Activated T-helper 1 cell treated with anti-CD3 and anti-CD28 coated beads, Interleukin-12 subunit alpha, Interleukin-12 subunit beta, Interleukin-2, Interleukin-4 antibody, amounts not matched to agents 30 ng/mL and 10 ng/mL and 1 ng/mL, durations not matched to agents 14 hours and 24 hours and 36 hours (primary cell): ENCODE measurements at regions of chr1 and their contacts with region 1.

Region 1: DNA sequence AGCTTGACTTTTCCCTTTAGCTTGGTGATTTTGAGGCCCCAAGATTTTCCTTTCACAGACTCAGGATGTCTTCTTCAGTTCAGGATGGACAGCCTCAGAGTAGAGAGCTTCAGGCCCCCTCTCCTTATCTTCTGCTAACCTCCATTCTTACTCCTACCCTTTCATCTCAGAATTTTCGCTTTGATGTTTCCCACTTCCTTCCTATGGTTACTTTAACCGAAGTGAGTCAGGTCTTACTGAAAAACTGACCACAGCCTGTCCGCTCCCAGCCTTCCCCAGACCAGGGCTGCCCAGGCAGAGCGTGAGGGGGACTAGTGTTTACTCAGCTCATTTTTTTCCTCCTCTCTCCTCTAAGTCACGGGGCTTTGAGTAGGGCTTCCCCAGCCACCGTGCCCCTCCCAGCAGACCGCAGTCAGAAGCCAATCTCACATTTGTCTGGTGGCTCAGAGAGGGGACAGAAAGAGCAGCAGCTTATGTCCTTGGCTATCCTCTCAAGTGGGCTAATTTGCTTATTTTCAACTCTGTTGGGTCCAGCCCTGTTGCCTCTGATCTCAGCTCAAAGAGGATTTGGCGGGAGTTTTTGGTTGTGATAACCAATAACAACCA is 4.2 kb upstream of the IL19 start:
- DNase-seq: peak; percentile 64
- H3K4me3 Mint-ChIP-seq: peak overlapping the region; percentile 29
- H3K27ac Mint-ChIP-seq: no peak overlapping the region
- H3K4me1 Mint-ChIP-seq: peaks cover 74% of the 10 kb centered on the region
- H3K27me3 Mint-ChIP-seq: peaks cover 34% of the 10 kb centered on the region

Region 2: GRCh38 chr1:206658264-206658980 is 107.9 kb before region 1 on chr1:
- intact Hi-C with region 1: no loop called
- DNase-seq: peak; percentile 43
- H3K4me3 Mint-ChIP-seq: no peak overlapping the region
- H3K27ac Mint-ChIP-seq: no peak overlapping the region
- H3K4me1 Mint-ChIP-seq: peaks cover 26% of the 10 kb centered on the region
- H3K27me3 Mint-ChIP-seq: no peaks in the 10 kb centered on the region

Region 3: DNA sequence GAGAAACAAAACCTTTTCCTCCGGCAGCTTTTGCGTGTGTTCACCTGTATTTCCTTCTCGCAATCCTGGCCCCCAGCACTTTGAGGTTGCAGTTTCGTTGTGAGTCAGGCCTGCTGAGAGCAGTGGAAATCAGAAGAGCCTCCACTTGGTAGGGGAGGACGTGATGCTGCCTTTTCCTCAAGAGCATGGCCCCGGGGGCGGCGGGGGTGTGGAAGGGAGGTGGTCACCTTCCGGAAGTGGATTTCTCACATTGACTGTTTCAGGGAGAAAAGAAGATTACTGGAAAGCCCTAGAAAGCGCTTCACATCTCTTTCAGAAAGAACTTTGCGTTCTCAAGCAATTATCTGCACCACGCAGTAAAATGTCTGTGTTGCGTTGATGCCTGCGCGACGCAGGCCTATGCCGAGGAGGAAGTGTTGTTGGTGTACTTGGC is 18.1 kb after region 1 on chr1:
- intact Hi-C with region 1: loop called (anchors 1 kb)
- DNase-seq: peak; percentile 87
- H3K4me3 Mint-ChIP-seq: peak overlapping the region; percentile 72
- H3K27ac Mint-ChIP-seq: peak overlapping the region; percentile 93
- H3K4me1 Mint-ChIP-seq: peaks cover 69% of the 10 kb centered on the region
- H3K27me3 Mint-ChIP-seq: peaks cover 14% of the 10 kb centered on the region

Region 4: DNA sequence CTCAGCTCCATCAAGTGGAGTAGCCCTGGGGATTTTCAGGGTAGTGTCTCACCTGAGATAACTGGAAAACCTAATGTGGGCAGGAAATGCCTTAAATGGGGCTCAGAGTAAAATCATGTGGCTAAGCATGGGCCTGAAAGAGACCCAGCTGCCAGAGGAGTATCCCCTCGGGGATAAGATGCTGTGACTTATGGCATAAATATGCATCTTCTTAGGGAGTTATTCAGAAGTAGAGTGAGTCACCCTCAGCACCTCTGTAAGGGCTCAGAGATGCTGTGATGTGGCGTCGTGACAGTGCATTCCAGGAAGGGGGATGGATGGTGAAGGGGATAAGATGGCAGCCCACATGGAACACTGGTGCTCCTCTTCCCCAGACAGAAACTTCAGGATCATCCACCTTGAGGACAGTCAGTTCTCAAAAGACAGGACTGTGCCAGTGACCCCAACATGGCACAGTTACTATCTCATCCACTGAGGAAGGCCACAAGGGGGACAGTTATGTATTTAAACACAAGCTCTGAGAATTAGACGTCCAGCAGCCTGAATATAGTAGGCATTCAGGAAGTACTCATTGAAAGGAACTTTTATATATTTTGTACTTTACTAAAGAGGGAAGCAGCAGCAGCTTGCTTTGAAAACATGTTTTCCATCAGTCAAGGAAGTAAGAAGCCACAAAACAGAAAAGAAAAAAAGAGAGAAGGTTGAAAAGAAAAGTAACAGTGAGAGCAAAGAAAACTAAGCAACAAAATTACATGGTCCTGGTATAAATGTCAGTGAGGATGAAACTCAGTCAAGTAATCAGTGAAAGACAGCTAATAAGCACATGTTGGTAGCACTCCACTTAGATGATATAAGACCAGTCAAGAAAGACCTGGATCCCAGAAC is 139.2 kb after region 1 on chr1:
- intact Hi-C with region 1: no loop called
- DNase-seq: no peak
- H3K4me3 Mint-ChIP-seq: peak overlapping the region; percentile 48
- H3K27ac Mint-ChIP-seq: peak overlapping the region; percentile 69
- H3K4me1 Mint-ChIP-seq: peaks cover 62% of the 10 kb centered on the region
- H3K27me3 Mint-ChIP-seq: no peaks in the 10 kb centered on the region